Vagina (tissue), 2 donors: ENCODE measurements at regions of chr16 and their contacts with region 1.

Region 1: DNA sequence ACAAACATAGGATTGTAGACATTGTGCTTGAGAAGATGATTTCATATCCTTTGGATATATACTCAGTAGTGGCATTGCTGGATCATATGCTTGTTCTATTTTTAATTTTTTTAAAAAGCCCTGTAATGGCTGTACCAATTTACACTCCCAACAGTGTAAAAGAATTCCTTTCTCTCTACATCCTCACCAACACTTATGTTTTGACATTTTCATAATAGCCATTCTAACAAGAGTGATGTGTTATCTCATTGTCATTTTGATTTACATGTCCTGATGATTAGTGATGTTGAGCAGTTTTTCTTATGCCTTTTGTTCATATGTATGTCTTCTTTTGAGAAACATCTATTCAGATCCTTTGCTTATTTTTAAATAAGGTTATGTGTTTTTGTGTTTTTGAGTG is 1039.2 kb upstream of the GOT2 start:
- DNase-seq: no peak
- H3K4me3 ChIP-seq: no peak overlapping the region
- H3K27ac ChIP-seq: no peak overlapping the region
- H3K4me1 ChIP-seq: no peaks in the 10 kb centered on the region
- H3K27me3 ChIP-seq: no peaks in the 10 kb centered on the region
- CTCF ChIP-seq: no peak
- POLR2A ChIP-seq: no peak

Region 2: GRCh38 chr16:61684541-61684940 is 1911.2 kb after region 1 on chr16:
- intact Hi-C with region 1: loop called (anchors 10 kb)
- DNase-seq: no peak
- H3K4me3 ChIP-seq: no peak overlapping the region
- H3K27ac ChIP-seq: no peak overlapping the region
- H3K4me1 ChIP-seq: no peaks in the 10 kb centered on the region
- H3K27me3 ChIP-seq: no peaks in the 10 kb centered on the region
- CTCF ChIP-seq: no peak
- POLR2A ChIP-seq: no peak